ENCODE measurements at regions of chr13 and their contacts with region 1.

Region 1: DNA sequence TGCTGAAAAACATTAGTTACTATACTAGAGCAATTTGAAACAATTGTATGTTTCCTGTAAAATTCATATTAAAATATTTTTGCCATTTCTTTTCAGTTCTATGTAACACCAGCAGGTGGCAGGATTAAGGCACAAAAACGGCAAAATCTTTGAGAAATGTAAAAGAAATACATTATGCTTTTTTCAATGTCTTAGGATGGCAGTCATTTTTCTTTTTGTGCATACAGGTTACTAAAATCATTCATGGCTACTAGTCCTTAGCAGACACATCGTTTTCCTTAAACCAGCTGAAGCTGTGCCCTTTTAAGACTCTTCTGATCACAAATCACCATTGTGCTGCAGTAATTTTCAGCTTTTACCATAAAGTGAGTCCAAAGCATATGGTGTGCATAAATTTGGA is 800.7 kb upstream of the SLITRK5 start:
- DNase-seq: no peak

Region 2: GRCh38 chr13:87274209-87274819 is 403.9 kb after region 1 on chr13:
- intact Hi-C with region 1: loop called (anchors 2 kb)
- DNase-seq: no peak